CD4-positive, alpha-beta memory T cell (primary cell): ENCODE measurements at regions of chr11 and their contacts with region 1.

Region 1: GRCh38 chr11:58562375-58562800 is 13.3 kb downstream of the LPXN start:
- DNase-seq: peak in 4 of 5 donors; percentile 14 to 32 (median 24)
- H3K4me3 ChIP-seq: no peak overlapping the region
- H3K4me3 Mint-ChIP-seq: peak overlapping the region in 7 of 8 donors; percentile 41 to 76 (median 66)
- H3K27ac ChIP-seq: peak overlapping the region; percentile 15
- H3K27ac Mint-ChIP-seq: peak overlapping the region; percentile 41 to 95 (median 85)
- H3K4me1 ChIP-seq: peaks cover 72% of the 10 kb centered on the region
- H3K4me1 Mint-ChIP-seq: peaks cover 44 to 70% (median 48%) of the 10 kb centered on the region in 4 donors
- H3K27me3 ChIP-seq: no peaks in the 10 kb centered on the region
- H3K27me3 Mint-ChIP-seq: no peaks in the 10 kb centered on the region

Region 2: DNA sequence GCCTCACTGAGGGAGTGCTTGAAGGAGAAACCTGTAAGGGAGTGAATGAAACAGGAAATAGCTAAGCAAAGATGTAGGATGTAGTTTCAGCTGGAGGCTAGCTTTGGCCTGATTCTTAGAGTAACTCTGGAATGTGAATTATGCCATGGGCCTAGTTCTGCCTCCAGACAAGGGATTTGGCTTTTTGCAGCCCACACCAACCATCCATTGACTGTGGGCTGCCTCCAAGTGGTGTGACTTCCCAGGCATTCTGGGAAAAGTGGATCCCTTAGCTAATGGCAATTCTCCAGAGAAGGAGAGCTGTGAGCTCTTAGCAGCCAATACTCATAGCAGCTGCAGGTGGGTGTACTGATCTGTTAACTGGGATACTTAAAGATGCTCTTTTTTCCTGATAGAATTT is 435.0 kb before region 1 on chr11:
- CTCF ChIA-PET with region 1: no interaction called
- POLR2A ChIA-PET with region 1: no interaction called
- intact Hi-C with region 1: no loop called
- DNase-seq: no peak
- H3K4me3 ChIP-seq: no peak overlapping the region
- H3K4me3 Mint-ChIP-seq: no peak overlapping the region
- H3K27ac ChIP-seq: no peak overlapping the region
- H3K27ac Mint-ChIP-seq: no peak overlapping the region
- H3K4me1 ChIP-seq: no peaks in the 10 kb centered on the region
- H3K4me1 Mint-ChIP-seq: no peaks in the 10 kb centered on the region
- H3K27me3 ChIP-seq: no peaks in the 10 kb centered on the region
- H3K27me3 Mint-ChIP-seq: peaks cover 6 to 8% of the 10 kb centered on the region in 2 donors

Region 3: DNA sequence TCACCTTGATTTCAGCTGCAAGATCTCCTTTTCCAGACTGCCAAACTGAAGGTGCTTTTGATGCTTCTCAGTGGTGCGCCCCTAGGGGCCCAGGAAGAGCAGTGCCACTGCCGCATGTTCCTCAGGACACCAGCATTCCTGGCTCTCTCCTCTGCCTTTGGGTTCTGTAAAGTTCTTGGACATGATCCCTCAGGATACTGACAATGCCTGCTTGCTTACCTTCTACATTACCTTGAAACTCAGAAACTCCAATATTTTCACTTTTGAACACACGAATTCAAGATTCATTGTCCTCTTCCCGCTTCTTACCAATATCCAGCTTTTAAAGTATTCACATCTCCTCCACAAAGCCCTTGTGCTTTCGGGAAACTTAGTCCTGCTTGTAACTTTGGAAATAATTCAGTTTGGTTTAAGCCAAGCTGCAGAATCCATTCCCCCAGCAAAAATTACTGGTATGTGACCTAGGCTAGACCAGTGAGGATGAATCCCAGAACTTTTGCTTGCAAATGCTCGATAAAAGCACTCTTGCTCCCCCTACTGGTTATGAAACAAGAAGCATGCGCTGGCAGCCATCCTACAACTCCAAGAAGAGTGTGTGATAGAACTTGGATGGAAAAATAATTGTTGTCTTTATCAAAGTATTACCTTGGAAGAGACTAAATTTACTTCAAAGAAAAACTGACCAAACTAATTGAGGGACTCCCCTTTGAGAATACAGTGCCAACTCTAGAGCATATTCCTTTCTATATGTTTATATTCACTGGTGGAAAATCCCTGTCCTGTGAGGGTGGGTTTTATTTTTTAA is 38.0 kb before region 1 on chr11:
- CTCF ChIA-PET with region 1: interaction called, 19 read pairs
- POLR2A ChIA-PET with region 1: interaction called, 5 read pairs
- intact Hi-C with region 1: no loop called
- DNase-seq: peak; percentile 57 to 66 (median 63)
- H3K4me3 ChIP-seq: peak overlapping the region in 1 of 2 donors; percentile 22
- H3K4me3 Mint-ChIP-seq: peak overlapping the region; percentile 68 to 85 (median 76)
- H3K27ac ChIP-seq: peak overlapping the region; percentile 55
- H3K27ac Mint-ChIP-seq: peak overlapping the region; percentile 77 to 97 (median 94)
- H3K4me1 ChIP-seq: peaks cover 35% of the 10 kb centered on the region
- H3K4me1 Mint-ChIP-seq: peaks cover 31 to 54% (median 40%) of the 10 kb centered on the region in 4 donors
- H3K27me3 ChIP-seq: no peaks in the 10 kb centered on the region
- H3K27me3 Mint-ChIP-seq: no peaks in the 10 kb centered on the region

Region 4: GRCh38 chr11:58573451-58574104 is 11.2 kb after region 1 on chr11:
- CTCF ChIA-PET with region 1: interaction called, 187 read pairs
- POLR2A ChIA-PET with region 1: interaction called, 109 read pairs
- intact Hi-C with region 1: loop called (anchors 2 kb)
- DNase-seq: peak; percentile 50 to 84 (median 58)
- H3K4me3 ChIP-seq: peak overlapping the region; percentile 76 to 96
- H3K4me3 Mint-ChIP-seq: peak overlapping the region; percentile 92 to 99 (median 95)
- H3K27ac ChIP-seq: peak overlapping the region; percentile 99
- H3K27ac Mint-ChIP-seq: peak overlapping the region; percentile 99 to 100 (median 100)
- H3K4me1 ChIP-seq: peaks cover 66% of the 10 kb centered on the region
- H3K4me1 Mint-ChIP-seq: peaks cover 33 to 83% (median 57%) of the 10 kb centered on the region in 4 donors
- H3K27me3 ChIP-seq: no peaks in the 10 kb centered on the region
- H3K27me3 Mint-ChIP-seq: peaks cover 0 to 3% of the 10 kb centered on the region in 2 donors

Region 5: GRCh38 chr11:58629857-58630256 is 67.5 kb after region 1 on chr11:
- CTCF ChIA-PET with region 1: interaction called, 81 read pairs
- POLR2A ChIA-PET with region 1: no interaction called
- intact Hi-C with region 1: no loop called
- DNase-seq: peak in 4 of 5 donors; percentile 12 to 34 (median 18)
- H3K4me3 ChIP-seq: no peak overlapping the region
- H3K4me3 Mint-ChIP-seq: no peak overlapping the region
- H3K27ac ChIP-seq: no peak overlapping the region
- H3K27ac Mint-ChIP-seq: peak overlapping the region in 2 of 7 donors; percentile 1 to 25
- H3K4me1 ChIP-seq: no peaks in the 10 kb centered on the region
- H3K4me1 Mint-ChIP-seq: peaks cover 0 to 4% (median 3%) of the 10 kb centered on the region in 4 donors
- H3K27me3 ChIP-seq: no peaks in the 10 kb centered on the region
- H3K27me3 Mint-ChIP-seq: no peaks in the 10 kb centered on the region